ENCODE measurements at regions of chr5 and their contacts with region 1.

Region 1: DNA sequence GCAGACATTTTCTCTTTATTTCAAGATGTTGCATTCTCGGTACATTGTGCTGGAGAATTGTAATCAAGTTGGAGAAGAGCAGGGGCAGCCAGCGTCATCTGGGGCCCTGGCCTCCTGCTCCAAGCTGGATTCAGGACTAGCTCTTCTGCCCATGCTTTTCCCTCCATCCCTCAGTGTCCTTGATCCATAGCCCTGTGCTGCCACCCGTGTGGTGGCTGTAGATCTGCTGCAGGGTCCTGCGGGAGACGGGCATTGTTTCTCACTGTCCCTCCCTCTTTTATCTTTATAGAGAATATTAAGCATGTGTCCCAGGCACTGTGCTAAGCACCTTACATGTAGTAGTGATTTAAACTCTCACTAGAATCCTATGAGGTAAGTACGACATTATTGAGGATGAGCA is 60.5 kb upstream of the HAND1 start:
- DNase-seq: no peak
- H3K4me3 Mint-ChIP-seq: no peak overlapping the region
- H3K27ac Mint-ChIP-seq: no peak overlapping the region
- H3K4me1 Mint-ChIP-seq: no peaks in the 10 kb centered on the region
- H3K27me3 Mint-ChIP-seq: peaks cover 12% of the 10 kb centered on the region

Region 2: GRCh38 chr5:154320224-154321089 is 218.0 kb before region 1 on chr5:
- CTCF ChIA-PET with region 1: no interaction called
- intact Hi-C with region 1: no loop called
- DNase-seq: no peak
- H3K4me3 Mint-ChIP-seq: no peak overlapping the region
- H3K27ac Mint-ChIP-seq: no peak overlapping the region
- H3K4me1 Mint-ChIP-seq: no peaks in the 10 kb centered on the region
- H3K27me3 Mint-ChIP-seq: no peaks in the 10 kb centered on the region

Region 3: GRCh38 chr5:154520861-154521453 is 17.5 kb before region 1 on chr5:
- CTCF ChIA-PET with region 1: interaction called, 10 read pairs
- intact Hi-C with region 1: no loop called
- DNase-seq: peak; percentile 30
- H3K4me3 Mint-ChIP-seq: no peak overlapping the region
- H3K27ac Mint-ChIP-seq: no peak overlapping the region
- H3K4me1 Mint-ChIP-seq: peaks cover 1% of the 10 kb centered on the region
- H3K27me3 Mint-ChIP-seq: peaks cover 35% of the 10 kb centered on the region

Region 4: DNA sequence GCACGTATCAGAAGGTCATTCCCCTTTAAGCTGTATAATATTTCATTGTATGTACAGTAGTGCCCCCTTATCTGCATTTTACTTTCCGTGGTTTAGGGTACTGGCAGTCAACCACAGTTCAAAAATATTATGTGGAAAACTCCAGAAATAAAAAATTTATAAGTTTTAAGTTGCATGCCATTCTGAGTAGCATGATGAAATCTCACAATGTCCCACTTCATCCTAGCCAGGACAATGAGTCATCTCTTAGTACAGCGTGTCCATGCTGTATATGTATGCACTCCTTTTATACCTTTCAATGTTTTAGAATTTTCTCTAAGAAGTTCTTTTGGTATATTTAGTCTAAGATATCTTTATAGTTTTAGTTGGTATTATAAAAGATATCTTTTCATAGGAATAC is 54.6 kb after region 1 on chr5:
- CTCF ChIA-PET with region 1: no interaction called
- intact Hi-C with region 1: no loop called
- DNase-seq: no peak
- H3K4me3 Mint-ChIP-seq: no peak overlapping the region
- H3K27ac Mint-ChIP-seq: no peak overlapping the region
- H3K4me1 Mint-ChIP-seq: no peaks in the 10 kb centered on the region
- H3K27me3 Mint-ChIP-seq: peaks cover 2% of the 10 kb centered on the region

Region 5: DNA sequence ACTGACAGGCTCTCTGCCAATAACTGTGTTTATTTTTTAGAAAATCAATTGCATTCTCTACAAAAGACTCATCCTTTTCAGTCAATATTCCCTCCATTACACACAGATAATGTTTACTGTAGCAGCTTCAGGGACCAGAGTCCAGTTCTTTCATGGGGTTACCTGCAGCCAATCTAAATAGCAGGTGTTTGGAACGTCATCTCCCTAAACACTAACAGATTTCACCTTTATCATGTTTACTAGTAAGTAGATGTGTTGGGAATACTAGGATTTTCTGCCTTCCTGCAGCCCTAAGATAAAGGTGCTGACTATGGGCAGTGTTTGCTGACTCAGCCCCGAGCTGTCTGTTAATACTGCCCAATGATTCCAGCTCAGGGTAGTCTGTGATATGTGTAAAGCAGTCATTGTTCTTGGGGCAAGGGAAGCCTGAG is 922.0 kb after region 1 on chr5:
- CTCF ChIA-PET with region 1: no interaction called
- intact Hi-C with region 1: no loop called
- DNase-seq: no peak
- H3K4me3 Mint-ChIP-seq: no peak overlapping the region
- H3K27ac Mint-ChIP-seq: no peak overlapping the region
- H3K4me1 Mint-ChIP-seq: no peaks in the 10 kb centered on the region
- H3K27me3 Mint-ChIP-seq: no peaks in the 10 kb centered on the region

Region 6: DNA sequence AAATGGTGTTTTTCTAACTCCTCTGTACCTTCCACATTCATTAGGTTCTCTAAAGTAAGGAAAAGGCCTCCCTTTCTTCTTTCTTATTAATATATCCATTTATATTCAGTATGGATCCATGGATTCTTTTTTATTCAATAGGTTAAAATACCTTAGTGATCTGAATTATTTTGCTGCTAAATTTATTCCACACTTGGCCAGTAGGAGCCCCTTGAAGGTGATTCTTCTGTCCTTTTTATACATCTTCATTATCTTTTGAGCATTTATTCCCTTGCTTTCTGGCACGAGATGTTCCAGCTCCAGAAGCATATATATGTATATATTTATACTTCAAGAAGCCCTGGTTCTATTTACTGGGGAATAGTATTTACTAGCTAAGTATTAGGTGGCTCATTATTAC is 1476.6 kb after region 1 on chr5:
- CTCF ChIA-PET with region 1: no interaction called
- intact Hi-C with region 1: no loop called
- DNase-seq: no peak
- H3K4me3 Mint-ChIP-seq: no peak overlapping the region
- H3K27ac Mint-ChIP-seq: no peak overlapping the region
- H3K4me1 Mint-ChIP-seq: no peaks in the 10 kb centered on the region
- H3K27me3 Mint-ChIP-seq: peaks cover 3% of the 10 kb centered on the region